Esophagus squamous epithelium (tissue), 5 donors: ENCODE measurements at regions of chr5 and their contacts with region 1.

Region 1: GRCh38 chr5:33934176-33934575 is 2.0 kb upstream of the RXFP3 start:
- DNase-seq: no peak
- H3K4me3 ChIP-seq: no peak overlapping the region
- H3K27ac ChIP-seq: no peak overlapping the region
- H3K4me1 ChIP-seq: peaks cover 0 to 23% (median 6%) of the 10 kb centered on the region in 3 donors
- H3K27me3 ChIP-seq: peaks cover 0 to 50% (median 18%) of the 10 kb centered on the region in 4 donors
- CTCF ChIP-seq: no peak
- POLR2A ChIP-seq: no peak

Region 2: GRCh38 chr5:32942225-32942989 is 991.8 kb before region 1 on chr5:
- intact Hi-C with region 1: no loop called
- DNase-seq: no peak
- H3K4me3 ChIP-seq: no peak overlapping the region
- H3K27ac ChIP-seq: no peak overlapping the region
- H3K4me1 ChIP-seq: peaks cover 0 to 10% (median 0%) of the 10 kb centered on the region in 3 donors
- H3K27me3 ChIP-seq: no peaks in the 10 kb centered on the region
- CTCF ChIP-seq: peak in 3 of 6 experiments; percentile 28 to 66 (median 32)
- POLR2A ChIP-seq: no peak

Region 3: DNA sequence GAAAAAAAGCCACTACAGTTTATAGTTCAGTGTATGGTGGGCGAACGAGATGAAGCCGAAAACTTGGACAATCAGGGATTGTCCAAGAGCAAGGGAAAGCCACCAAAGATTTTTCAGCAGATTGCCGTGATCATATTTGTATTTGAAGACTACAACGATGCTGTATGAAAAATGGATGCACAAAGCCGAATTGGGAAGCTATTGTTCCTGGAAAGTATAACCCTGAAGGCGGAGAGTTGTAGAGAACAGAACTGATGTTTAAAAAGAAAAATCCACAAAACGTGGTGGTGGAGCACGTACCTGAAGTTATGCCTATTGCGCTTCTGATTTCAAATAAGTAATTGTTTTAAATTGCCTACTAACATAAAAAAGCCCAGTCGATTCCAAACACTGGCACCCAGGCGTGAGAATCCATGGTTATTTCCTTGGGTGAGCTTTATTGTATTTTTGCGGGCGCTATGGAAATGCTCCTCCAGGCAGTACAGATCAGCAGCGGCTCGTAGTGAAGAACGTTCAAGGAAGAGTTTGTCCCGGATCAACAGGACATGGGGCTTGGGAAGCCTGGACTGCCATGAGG is 494.2 kb before region 1 on chr5:
- intact Hi-C with region 1: loop called (anchors 5 kb)
- DNase-seq: no peak
- H3K4me3 ChIP-seq: peak overlapping the region; percentile 87 to 91 (median 88)
- H3K27ac ChIP-seq: peak overlapping the region; percentile 87 to 98 (median 96)
- H3K4me1 ChIP-seq: peaks cover 6 to 53% (median 13%) of the 10 kb centered on the region in 3 donors
- H3K27me3 ChIP-seq: no peaks in the 10 kb centered on the region
- CTCF ChIP-seq: peak in 1 of 6 experiments; percentile 4
- POLR2A ChIP-seq: no peak

Region 4: DNA sequence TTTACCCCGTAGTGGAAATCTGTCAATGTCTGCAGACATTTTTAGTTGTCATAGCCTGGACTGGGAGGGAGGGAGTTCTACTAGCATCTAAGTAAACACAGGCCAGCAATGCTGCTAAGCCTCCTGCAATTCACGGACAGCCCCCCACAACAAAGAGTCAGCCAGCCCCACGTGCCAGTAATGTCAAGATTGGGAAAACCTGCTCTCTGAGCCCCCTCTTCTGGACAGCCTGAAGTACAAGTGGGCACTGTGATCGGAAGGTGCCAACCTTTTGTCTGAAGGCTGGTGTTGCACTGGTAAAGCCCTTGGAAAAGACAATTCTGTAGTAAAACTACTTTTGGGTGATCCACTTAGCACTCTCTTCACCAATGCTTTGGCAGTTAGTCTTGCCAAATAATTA is 338.9 kb before region 1 on chr5:
- intact Hi-C with region 1: loop called (anchors 10 kb)
- DNase-seq: no peak
- H3K4me3 ChIP-seq: no peak overlapping the region
- H3K27ac ChIP-seq: no peak overlapping the region
- H3K4me1 ChIP-seq: no peaks in the 10 kb centered on the region
- H3K27me3 ChIP-seq: no peaks in the 10 kb centered on the region
- CTCF ChIP-seq: no peak
- POLR2A ChIP-seq: no peak